ENCODE measurements at regions of chr2 and their contacts with region 1.

Region 1: GRCh38 chr2:95159690-95160449 is at the start of gene ZNF514:
- DNase-seq: peak; percentile 84
- ATAC-seq: peak; percentile 93
- H3K4me3 Mint-ChIP-seq: peak within 1 kb of the TSS; percentile 88
- H3K27ac Mint-ChIP-seq: peak within 1 kb of the TSS; percentile 89
- H3K4me1 Mint-ChIP-seq: peaks cover 12% of the 10 kb centered on the region
- H3K27me3 Mint-ChIP-seq: no peaks in the 10 kb centered on the region
- total RNA-seq, gene ZNF514: 22.7 to 26.7 TPM

Region 2: GRCh38 chr2:95062242-95063085 is 97.4 kb before region 1 on chr2:
- POLR2A ChIA-PET with region 1: no interaction called
- DNase-seq: no peak
- ATAC-seq: peak; percentile 2
- H3K4me3 Mint-ChIP-seq: peak overlapping the region; percentile 45
- H3K27ac Mint-ChIP-seq: peak overlapping the region; percentile 86
- H3K4me1 Mint-ChIP-seq: peaks cover 30% of the 10 kb centered on the region
- H3K27me3 Mint-ChIP-seq: no peaks in the 10 kb centered on the region

Region 3: DNA sequence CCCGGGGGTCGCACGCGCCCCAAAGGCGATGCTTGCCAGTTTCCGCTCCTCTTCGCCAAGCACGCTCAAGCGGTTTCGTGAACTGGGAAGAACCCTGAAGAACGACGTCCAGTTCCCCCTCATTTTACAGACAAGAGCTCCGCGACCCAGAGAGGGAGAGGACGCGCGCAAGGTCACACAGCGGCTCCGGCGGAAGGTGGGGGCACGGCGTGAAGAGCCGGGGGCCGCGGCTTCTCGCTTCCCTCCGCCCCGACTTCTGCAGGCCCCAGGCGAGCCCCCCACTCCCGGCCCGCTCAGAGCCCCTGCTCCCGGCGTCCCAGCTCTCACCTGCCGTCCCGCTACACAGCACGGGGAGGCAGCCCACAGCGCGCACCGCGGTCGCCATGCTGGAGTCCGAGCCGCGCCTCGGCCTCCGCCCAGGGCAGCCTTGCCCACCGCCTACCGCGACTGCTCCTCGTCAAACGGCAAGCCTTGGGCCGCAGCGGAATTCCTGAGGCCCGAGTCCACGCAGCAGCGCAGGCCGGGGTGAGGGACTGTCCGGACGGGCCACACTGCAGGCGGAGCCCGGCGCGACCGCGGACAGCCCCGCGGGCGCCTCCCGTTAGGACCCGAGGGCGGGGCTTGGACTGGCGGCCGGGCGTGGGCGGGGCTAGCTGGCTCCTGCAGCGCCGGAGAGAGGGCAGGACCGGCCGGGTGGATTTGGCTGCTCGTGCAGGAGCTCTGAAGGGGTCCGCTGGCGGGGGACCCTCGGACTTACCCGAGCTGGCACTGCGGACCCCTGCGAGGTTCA is 38.3 kb before region 1 on chr2 and contains the start of gene MRPS5:
- POLR2A ChIA-PET with region 1: interaction called, 16 read pairs
- DNase-seq: peak; percentile 94
- ATAC-seq: peak; percentile 88
- H3K4me3 Mint-ChIP-seq: peak within 1 kb of the TSS; percentile 94
- H3K27ac Mint-ChIP-seq: peak within 1 kb of the TSS; percentile 93
- H3K4me1 Mint-ChIP-seq: peaks cover 41% of the 10 kb centered on the region
- H3K27me3 Mint-ChIP-seq: no peaks in the 10 kb centered on the region
- total RNA-seq, gene MRPS5: 75.2 to 79.3 TPM

Region 4: DNA sequence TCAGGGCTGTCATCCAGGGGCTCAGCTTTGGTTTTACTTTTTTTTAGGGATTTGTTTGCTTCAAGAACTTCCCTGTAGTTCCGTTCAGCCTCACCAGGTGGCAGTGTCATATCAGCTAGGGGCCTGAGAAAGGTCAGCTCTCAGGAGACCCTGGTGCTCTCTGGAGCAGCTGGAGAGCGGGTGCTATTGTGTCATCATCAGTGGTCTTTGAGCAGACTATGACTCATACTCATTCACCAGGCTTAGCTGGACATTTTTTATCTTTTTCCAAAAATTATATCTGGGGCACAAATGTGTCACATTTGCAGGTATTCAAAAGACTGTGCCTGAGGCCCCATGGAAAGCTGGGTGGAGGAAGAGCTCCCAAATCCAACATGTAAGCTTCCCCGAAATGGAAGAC is 71.9 kb after region 1 on chr2:
- POLR2A ChIA-PET with region 1: no interaction called
- DNase-seq: no peak
- ATAC-seq: no peak
- H3K4me3 Mint-ChIP-seq: no peak overlapping the region
- H3K27ac Mint-ChIP-seq: no peak overlapping the region
- H3K4me1 Mint-ChIP-seq: no peaks in the 10 kb centered on the region
- H3K27me3 Mint-ChIP-seq: no peaks in the 10 kb centered on the region

Measured in activated naive CD8-positive, alpha-beta T cell treated with anti-CD3 and anti-CD28 coated beads, Interleukin-2, amount 10 ng/mL, durations not matched to agents 7 days and 5 days (primary cell).